PC-3 (cell line): ENCODE measurements at regions of chr11 and their contacts with region 1.

Region 1: DNA sequence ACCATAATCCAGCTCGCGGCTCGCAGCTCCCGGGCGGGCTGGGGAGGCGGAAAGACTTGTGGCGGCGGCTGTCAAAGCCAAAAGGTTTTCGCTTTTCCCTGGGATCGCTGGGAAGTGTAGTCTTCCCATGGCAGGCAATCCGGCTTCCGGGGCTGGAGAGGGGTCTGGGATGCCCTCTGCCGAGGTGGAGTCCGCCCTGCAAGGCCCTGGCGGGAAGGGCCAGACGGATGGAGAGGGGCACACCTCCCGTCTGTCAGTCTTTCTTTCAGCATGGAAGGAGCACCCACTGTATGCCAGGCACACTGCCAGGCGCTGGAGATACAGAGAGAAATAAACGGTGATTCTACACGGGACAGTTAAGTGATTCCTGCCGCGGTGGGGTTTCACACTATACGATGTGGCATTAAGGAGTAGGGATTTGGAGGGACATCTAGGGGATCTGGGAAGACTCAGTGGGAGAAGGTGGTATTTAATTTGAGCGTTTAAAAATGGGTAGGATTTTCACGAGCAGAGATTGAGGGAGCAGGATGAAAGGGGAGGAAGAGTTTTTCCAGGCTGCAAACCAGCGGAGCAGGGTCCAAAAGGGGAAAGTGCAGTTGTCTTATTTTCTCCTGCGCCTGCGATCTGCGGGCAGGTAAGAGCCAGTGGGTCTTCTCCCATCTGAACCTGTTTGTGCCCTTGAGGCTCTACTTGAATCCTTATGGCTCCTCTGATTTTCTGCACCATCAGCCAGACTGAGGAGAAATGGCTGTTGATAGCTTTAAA is at the start of gene BACE1:
- DNase-seq: peak; percentile 91
- ATAC-seq: peak; percentile 96
- H3K4me3 ChIP-seq: peak within 1 kb of the TSS; percentile 85
- H3K27ac ChIP-seq: no peak within 1 kb of the TSS
- H3K4me1 ChIP-seq: peaks cover 20% of the 10 kb centered on the region
- H3K27me3 ChIP-seq: no peaks in the 10 kb centered on the region
- CTCF ChIP-seq: peak; percentile 61
- total RNA-seq, gene BACE1: 16.8 and 27.7 TPM in 2 replicates

Region 2: GRCh38 chr11:117232092-117232878 is 84.1 kb before region 1 on chr11 and contains the start of gene RNF214:
- CTCF ChIA-PET with region 1: no interaction called
- POLR2A ChIA-PET with region 1: no interaction called
- intact Hi-C with region 1: loop called (anchors 1 kb)
- DNase-seq: peak; percentile 93
- ATAC-seq: peak; percentile 78
- H3K4me3 ChIP-seq: peak within 1 kb of the TSS; percentile 86
- H3K27ac ChIP-seq: peak within 1 kb of the TSS; percentile 25
- H3K4me1 ChIP-seq: peaks cover 23% of the 10 kb centered on the region
- H3K27me3 ChIP-seq: no peaks in the 10 kb centered on the region
- CTCF ChIP-seq: peak; percentile 87
- total RNA-seq, gene RNF214: 7.4 TPM in 2 replicates

Region 3: DNA sequence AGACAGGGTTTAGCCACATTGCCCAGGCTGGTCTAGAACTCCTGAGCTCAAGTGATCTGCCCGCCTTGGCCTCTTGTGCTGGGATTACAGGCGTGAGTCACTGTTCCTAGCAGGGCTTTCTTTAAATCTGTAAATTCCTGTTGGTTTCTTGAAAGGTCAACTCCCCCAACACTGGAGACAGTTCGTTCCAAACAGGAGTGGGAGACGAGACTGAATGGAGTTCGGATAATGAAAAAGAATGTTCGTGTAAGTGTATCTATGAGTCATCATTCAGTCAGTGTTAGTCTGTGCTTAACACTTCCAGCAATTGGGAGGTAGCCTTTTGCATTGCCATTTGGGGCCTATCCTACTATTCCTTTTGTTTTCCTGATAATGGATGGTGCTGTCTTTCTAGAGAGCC is 35.2 kb before region 1 on chr11:
- CTCF ChIA-PET with region 1: no interaction called
- POLR2A ChIA-PET with region 1: no interaction called
- intact Hi-C with region 1: loop called (anchors 1 kb)
- DNase-seq: peak; percentile 88
- ATAC-seq: peak; percentile 96
- H3K4me3 ChIP-seq: no peak overlapping the region
- H3K27ac ChIP-seq: peak overlapping the region; percentile 66
- H3K4me1 ChIP-seq: peaks cover 17% of the 10 kb centered on the region
- H3K27me3 ChIP-seq: no peaks in the 10 kb centered on the region
- CTCF ChIP-seq: no peak